Activated CD8-positive, alpha-beta T cell treated with anti-CD3 and anti-CD28 coated beads for 36 hours (primary cell): ENCODE measurements at regions of chr17 and their contacts with region 1.

Region 1: GRCh38 chr17:74457146-74457819 is 9.2 kb upstream of the CD300A start:
- DNase-seq: peak; percentile 88
- ATAC-seq: peak; percentile 51
- H3K4me3 Mint-ChIP-seq: no peak overlapping the region
- H3K27ac Mint-ChIP-seq: no peak overlapping the region
- H3K4me1 Mint-ChIP-seq: peaks cover 12% of the 10 kb centered on the region
- H3K27me3 Mint-ChIP-seq: peaks cover 1% of the 10 kb centered on the region
- CTCF ChIP-seq: peak; percentile 90

Region 2: DNA sequence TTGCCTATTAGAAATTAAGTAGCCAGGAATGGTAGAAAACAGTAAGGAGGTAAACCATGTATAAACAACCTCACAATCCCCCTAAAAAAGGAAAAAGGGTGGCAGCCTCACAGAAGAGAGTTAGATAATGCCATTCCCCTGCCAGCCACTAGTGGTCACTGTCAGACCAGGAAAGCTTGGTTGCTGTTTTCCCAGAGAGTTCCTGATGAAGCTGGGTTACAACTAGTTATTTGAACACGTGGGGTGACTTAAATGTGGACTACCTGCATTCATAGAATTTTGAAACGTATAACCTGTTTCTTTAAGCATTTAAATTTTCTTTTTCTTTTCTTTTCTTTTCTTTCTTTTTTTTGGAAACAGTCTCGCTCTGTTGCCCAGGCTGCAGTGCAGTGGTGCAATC is 19.6 kb before region 1 on chr17:
- CTCF ChIA-PET with region 1: interaction called, 37 read pairs
- POLR2A ChIA-PET with region 1: no interaction called
- intact Hi-C with region 1: no loop called
- DNase-seq: peak; percentile 23
- ATAC-seq: no peak
- H3K4me3 Mint-ChIP-seq: no peak overlapping the region
- H3K27ac Mint-ChIP-seq: no peak overlapping the region
- H3K4me1 Mint-ChIP-seq: peaks cover 2% of the 10 kb centered on the region
- H3K27me3 Mint-ChIP-seq: peaks cover 16% of the 10 kb centered on the region
- CTCF ChIP-seq: peak; percentile 85

Region 3: GRCh38 chr17:74442670-74443515 is 14.4 kb before region 1 on chr17:
- CTCF ChIA-PET with region 1: interaction called, 37 read pairs
- POLR2A ChIA-PET with region 1: no interaction called
- intact Hi-C with region 1: no loop called
- DNase-seq: peak; percentile 53
- ATAC-seq: peak; percentile 71
- H3K4me3 Mint-ChIP-seq: no peak overlapping the region
- H3K27ac Mint-ChIP-seq: no peak overlapping the region
- H3K4me1 Mint-ChIP-seq: peaks cover 7% of the 10 kb centered on the region
- H3K27me3 Mint-ChIP-seq: peaks cover 1% of the 10 kb centered on the region
- CTCF ChIP-seq: no peak

Region 4: GRCh38 chr17:74467221-74467951 is 10.1 kb after region 1 on chr17:
- CTCF ChIA-PET with region 1: interaction called, 15 read pairs
- POLR2A ChIA-PET with region 1: no interaction called
- intact Hi-C with region 1: no loop called
- DNase-seq: no peak
- ATAC-seq: no peak
- H3K4me3 Mint-ChIP-seq: no peak overlapping the region
- H3K27ac Mint-ChIP-seq: peak overlapping the region; percentile 1
- H3K4me1 Mint-ChIP-seq: peaks cover 39% of the 10 kb centered on the region
- H3K27me3 Mint-ChIP-seq: no peaks in the 10 kb centered on the region
- CTCF ChIP-seq: no peak

Region 5: DNA sequence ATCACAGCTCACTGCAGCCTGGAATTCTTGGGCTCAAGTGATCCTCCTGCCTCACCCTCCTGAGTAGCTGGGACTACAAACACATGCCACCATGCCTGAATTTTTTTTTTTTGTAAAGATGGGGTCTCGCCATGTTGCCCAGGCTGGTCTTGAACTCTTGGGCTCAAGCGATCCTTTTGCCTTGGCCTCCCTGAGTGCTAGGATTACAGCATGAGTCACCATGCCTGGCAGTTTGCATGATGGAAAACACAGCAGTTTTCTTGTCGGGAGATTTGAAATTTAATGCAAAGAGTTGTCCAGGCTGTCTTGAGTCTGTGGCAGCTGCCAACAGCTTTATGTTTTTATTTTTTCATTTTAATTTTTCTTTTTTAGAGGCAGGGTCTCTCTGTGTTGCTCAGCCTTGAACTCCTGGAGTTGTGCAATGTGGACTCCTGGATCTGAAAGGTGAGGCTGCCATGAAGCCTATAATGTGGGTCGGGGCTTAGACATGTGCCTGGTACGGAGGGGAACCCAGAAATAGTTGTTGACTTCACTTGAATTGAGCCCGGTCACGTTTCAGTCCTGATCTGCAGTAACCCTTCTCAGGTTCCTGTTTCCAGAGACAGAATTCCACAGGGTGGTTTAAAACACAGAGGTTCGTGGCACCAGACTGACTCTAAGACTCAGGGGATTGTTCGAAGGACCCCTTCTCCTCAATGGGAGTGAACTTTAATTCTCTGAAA is 27.9 kb after region 1 on chr17:
- CTCF ChIA-PET with region 1: interaction called, 45 read pairs
- POLR2A ChIA-PET with region 1: no interaction called
- intact Hi-C with region 1: no loop called
- DNase-seq: no peak
- ATAC-seq: no peak
- H3K4me3 Mint-ChIP-seq: no peak overlapping the region
- H3K27ac Mint-ChIP-seq: no peak overlapping the region
- H3K4me1 Mint-ChIP-seq: peaks cover 7% of the 10 kb centered on the region
- H3K27me3 Mint-ChIP-seq: no peaks in the 10 kb centered on the region
- CTCF ChIP-seq: no peak

Region 6: DNA sequence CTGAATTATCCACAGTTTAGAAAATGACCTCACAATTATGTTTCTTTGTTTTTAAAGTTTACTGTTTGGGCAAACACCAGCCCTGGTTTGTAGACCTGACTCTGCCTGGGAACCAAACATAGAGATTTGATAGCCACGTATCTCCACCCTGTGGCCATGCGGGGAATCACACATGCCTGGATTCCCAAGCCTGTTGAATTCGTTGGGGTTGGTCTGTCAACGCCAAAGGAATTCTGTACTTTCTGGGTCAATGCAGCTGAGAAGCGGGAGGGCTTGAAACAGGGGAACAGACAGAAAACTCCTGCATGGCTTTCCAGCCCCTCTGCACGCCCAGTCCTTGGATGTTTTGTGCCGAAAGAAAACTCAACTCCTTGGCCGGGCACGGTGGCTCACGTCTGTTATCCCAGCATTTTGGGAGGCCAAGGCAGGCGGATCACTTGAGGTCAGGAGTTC is 36.1 kb after region 1 on chr17:
- CTCF ChIA-PET with region 1: interaction called, 45 read pairs
- POLR2A ChIA-PET with region 1: no interaction called
- intact Hi-C with region 1: no loop called
- DNase-seq: peak; percentile 76
- ATAC-seq: peak; percentile 96
- H3K4me3 Mint-ChIP-seq: no peak overlapping the region
- H3K27ac Mint-ChIP-seq: no peak overlapping the region
- H3K4me1 Mint-ChIP-seq: peaks cover 3% of the 10 kb centered on the region
- H3K27me3 Mint-ChIP-seq: no peaks in the 10 kb centered on the region
- CTCF ChIP-seq: peak; percentile 96